AG04450 (cell line): ENCODE measurements at regions of chr11 and their contacts with region 1.

Region 1: GRCh38 chr11:83249972-83250593 is 36.1 kb downstream of the CCDC90B start:
- DNase-seq: peak; percentile 29
- H3K4me3 ChIP-seq: no peak overlapping the region
- H3K27ac ChIP-seq: no peak overlapping the region
- H3K27me3 ChIP-seq: no peaks in the 10 kb centered on the region
- CTCF ChIP-seq: peak; percentile 76

Region 2: DNA sequence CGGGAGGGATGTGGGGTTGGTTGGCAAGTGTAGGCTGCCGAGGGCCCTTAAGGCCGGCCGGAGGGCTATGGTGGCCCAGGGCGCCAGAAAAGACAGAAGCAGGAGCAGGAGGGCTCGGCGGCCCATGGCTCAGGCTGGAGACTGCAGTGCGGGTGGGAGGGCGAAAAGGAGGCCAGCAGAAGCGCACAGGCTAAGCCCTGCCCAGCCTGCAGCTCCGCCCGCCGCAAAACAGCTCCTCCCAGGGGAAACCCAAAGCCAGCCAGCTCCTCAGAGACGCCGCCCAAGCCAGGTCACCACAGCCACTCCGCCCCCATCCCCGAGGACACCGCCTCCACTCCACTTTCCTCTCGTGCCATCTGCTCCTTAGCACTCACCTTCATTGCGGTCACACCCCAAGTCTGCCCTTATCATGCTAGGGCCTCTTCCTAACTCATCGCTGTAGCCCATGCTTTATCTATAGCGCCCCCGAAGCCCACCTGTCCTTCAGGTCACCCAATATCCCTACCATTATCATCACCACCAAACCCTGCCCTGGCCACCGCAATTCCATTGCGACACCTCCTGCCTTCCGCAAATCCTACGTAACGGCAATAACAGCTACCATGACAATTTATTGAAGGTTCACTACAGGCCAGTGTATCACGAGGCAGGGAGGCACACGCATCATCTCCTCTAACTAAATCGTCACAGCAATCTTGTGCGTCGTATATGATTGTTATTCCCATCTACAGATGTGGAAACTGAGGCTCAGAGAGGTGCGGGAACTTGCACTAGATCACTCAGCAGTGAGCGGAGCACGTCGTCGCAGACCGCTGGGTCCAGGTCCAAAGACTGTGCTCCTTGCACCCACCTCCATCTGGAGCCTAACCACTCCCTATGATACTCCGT is 349.6 kb before region 1 on chr11 and contains the start of gene PRCP:
- CTCF ChIA-PET with region 1: interaction called, 14 read pairs
- POLR2A ChIA-PET with region 1: interaction called, 6 read pairs
- DNase-seq: peak; percentile 61
- H3K4me3 ChIP-seq: peak within 1 kb of the TSS; percentile 87
- H3K27ac ChIP-seq: peak within 1 kb of the TSS; percentile 74
- H3K27me3 ChIP-seq: no peaks in the 10 kb centered on the region
- CTCF ChIP-seq: 0 out of 2 replicates have a peak, but pooled peaks have one; percentile 1
- polyA plus RNA-seq, gene PRCP: 128 and 157 TPM in 2 replicates

Region 3: DNA sequence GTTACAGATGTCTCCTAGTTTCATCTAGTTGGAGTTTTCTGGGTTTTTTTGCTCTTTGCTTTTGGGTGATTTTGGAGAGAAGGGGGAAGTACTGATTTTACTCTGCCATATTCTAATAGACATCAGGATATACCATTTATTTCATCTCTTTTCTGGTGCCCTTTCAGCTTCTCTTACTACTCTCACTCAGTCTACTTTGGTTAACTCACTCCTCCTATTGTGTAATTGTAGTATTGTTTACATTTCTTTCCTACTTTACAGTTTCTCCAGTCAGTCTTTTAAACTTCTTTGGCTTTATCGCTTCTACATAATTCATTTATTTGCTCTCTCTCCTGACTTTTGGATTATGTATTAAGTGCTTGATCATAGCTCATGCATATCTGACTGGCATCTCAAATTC is 50.0 kb before region 1 on chr11:
- CTCF ChIA-PET with region 1: interaction called, 16 read pairs
- POLR2A ChIA-PET with region 1: no interaction called
- DNase-seq: no peak
- H3K4me3 ChIP-seq: no peak overlapping the region
- H3K27ac ChIP-seq: no peak overlapping the region
- H3K27me3 ChIP-seq: no peaks in the 10 kb centered on the region
- CTCF ChIP-seq: no peak

Region 4: GRCh38 chr11:83235825-83236224 is 14.3 kb before region 1 on chr11:
- CTCF ChIA-PET with region 1: interaction called, 65 read pairs
- POLR2A ChIA-PET with region 1: no interaction called
- DNase-seq: no peak
- H3K4me3 ChIP-seq: no peak overlapping the region
- H3K27ac ChIP-seq: no peak overlapping the region
- H3K27me3 ChIP-seq: no peaks in the 10 kb centered on the region
- CTCF ChIP-seq: no peak

Region 5: GRCh38 chr11:83292709-83293456 is 42.8 kb after region 1 on chr11:
- CTCF ChIA-PET with region 1: interaction called, 12 read pairs
- POLR2A ChIA-PET with region 1: no interaction called
- DNase-seq: peak; percentile 29
- H3K4me3 ChIP-seq: peak overlapping the region; percentile 34; the same call in 1 of the 2 replicates
- H3K27ac ChIP-seq: no peak overlapping the region
- H3K27me3 ChIP-seq: no peaks in the 10 kb centered on the region
- CTCF ChIP-seq: peak; percentile 84

Region 6: GRCh38 chr11:83389975-83390374 is 139.9 kb after region 1 on chr11:
- CTCF ChIA-PET with region 1: no interaction called
- POLR2A ChIA-PET with region 1: no interaction called
- DNase-seq: no peak
- H3K4me3 ChIP-seq: no peak overlapping the region
- H3K27ac ChIP-seq: no peak overlapping the region
- H3K27me3 ChIP-seq: no peaks in the 10 kb centered on the region
- CTCF ChIP-seq: no peak